ENCODE measurements at regions of chr15 and their contacts with region 1.

Region 1: GRCh38 chr15:84748274-84749110 is at the start of gene ZNF592:
- DNase-seq: peak; percentile 69 to 85 (median 79)
- ATAC-seq: peak; percentile 86
- H3K4me3 ChIP-seq: peak within 1 kb of the TSS; percentile 96
- H3K4me3 Mint-ChIP-seq: peak within 1 kb of the TSS; percentile 94 to 99 (median 99)
- H3K27ac ChIP-seq: peak within 1 kb of the TSS; percentile 89
- H3K27ac Mint-ChIP-seq: peak within 1 kb of the TSS; percentile 94 to 100 (median 99)
- H3K4me1 ChIP-seq: peaks cover 29 to 37% of the 10 kb centered on the region in 2 donors
- H3K4me1 Mint-ChIP-seq: peaks cover 53 to 78% (median 71%) of the 10 kb centered on the region in 7 donors
- H3K27me3 ChIP-seq: no peaks in the 10 kb centered on the region
- H3K27me3 Mint-ChIP-seq: no peaks in the 10 kb centered on the region
- total RNA-seq, gene ZNF592: 36.6 to 39.0 (median 37.6) TPM

Region 2: DNA sequence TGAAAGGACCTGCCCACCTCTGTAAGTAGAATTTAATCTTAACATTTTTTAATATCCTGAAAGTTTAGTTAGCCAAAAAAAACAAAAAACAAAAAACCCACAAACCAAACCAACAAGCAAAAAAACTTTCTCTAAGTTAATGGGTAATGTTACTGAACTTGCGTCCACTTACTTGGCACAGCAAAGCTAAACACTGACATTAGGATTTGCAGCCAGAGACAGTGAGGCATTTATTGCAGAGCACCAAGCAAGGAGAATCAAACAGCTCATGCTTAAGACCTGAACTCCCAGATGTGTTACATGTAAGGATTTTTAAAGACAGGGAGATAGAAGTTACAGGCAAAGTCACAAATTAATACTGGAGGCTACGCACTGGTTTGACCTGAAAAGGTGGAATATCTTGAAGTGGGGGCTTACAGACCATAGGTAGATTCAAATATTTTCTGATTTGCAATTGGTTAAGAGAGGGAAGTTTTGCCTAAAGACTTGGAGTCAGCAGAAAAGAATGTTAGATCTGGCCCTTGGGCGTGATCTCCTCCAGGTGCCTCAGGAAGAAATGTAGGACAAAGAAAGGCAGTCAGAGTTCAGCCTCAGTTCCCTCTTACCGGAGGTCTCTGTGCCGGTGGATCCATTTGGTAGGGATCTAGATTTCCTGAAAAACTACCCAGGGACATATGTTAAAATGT is 889.5 kb before region 1 on chr15:
- CTCF ChIA-PET with region 1: no interaction called
- POLR2A ChIA-PET with region 1: no interaction called
- intact Hi-C with region 1: no loop called
- DNase-seq: no peak
- ATAC-seq: no peak
- H3K4me3 ChIP-seq: no peak overlapping the region
- H3K4me3 Mint-ChIP-seq: no peak overlapping the region
- H3K27ac ChIP-seq: no peak overlapping the region
- H3K27ac Mint-ChIP-seq: no peak overlapping the region
- H3K4me1 ChIP-seq: no peaks in the 10 kb centered on the region
- H3K4me1 Mint-ChIP-seq: no peaks in the 10 kb centered on the region
- H3K27me3 ChIP-seq: no peaks in the 10 kb centered on the region
- H3K27me3 Mint-ChIP-seq: peaks cover 0 to 25% (median 17%) of the 10 kb centered on the region in 5 donors

Region 3: GRCh38 chr15:84600851-84601838 is 147.3 kb before region 1 on chr15 and contains the start of gene ZSCAN2:
- CTCF ChIA-PET with region 1: no interaction called
- POLR2A ChIA-PET with region 1: interaction called, 5 read pairs
- intact Hi-C with region 1: loop called (anchors 1 to 2 kb)
- DNase-seq: peak; percentile 83 to 93 (median 90)
- ATAC-seq: peak; percentile 98
- H3K4me3 ChIP-seq: peak within 1 kb of the TSS; percentile 96
- H3K4me3 Mint-ChIP-seq: peak within 1 kb of the TSS; percentile 89 to 99 (median 96)
- H3K27ac ChIP-seq: peak within 1 kb of the TSS; percentile 77
- H3K27ac Mint-ChIP-seq: peak within 1 kb of the TSS; percentile 67 to 97 (median 88)
- H3K4me1 ChIP-seq: peaks cover 29 to 36% of the 10 kb centered on the region in 2 donors
- H3K4me1 Mint-ChIP-seq: peaks cover 53 to 89% (median 71%) of the 10 kb centered on the region in 7 donors
- H3K27me3 ChIP-seq: no peaks in the 10 kb centered on the region
- H3K27me3 Mint-ChIP-seq: no peaks in the 10 kb centered on the region
- total RNA-seq, gene ZSCAN2: 4.8 to 13.0 (median 6.8) TPM

Region 4: DNA sequence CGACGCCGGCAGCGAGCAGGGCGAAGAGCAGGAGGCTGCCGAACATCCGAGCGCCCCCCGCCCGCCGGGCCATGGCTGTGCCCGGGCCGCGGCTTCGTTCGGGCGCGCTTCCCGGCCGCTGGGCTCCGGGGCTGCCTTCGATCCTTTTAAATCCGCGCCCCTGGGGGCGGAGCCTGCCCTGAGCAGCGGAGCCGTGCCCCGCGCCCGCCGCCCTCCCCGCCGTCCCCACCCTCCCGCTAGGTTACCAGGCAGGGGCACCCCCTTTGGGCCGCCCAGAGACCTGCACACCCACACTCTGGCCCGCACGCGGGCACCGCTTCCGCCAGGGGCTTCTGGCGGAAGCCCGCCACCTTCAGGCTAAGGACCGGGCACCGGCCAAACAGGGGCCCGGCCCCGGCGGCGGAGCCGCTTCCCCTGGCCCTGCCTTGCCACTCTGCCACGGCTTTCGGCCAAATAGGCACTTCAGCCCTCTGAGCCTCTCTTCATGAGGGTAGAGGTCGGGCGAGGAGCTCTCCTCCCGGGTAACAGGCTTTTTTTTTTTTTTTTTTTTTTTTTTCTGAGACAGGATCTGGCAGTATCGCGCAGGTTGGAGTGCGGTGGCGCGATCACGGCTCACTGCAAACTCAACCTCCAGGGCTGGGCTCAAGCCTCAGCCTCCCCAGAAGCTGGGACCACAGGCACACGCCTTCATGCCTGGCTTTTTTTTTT is 90.3 kb before region 1 on chr15 and contains the start of gene NMB:
- CTCF ChIA-PET with region 1: interaction called, 6 read pairs
- POLR2A ChIA-PET with region 1: interaction called, 25 read pairs
- intact Hi-C with region 1: loop called (anchors 1 kb)
- DNase-seq: peak; percentile 76 to 88 (median 87)
- ATAC-seq: peak; percentile 82
- H3K4me3 ChIP-seq: peak within 1 kb of the TSS; percentile 73
- H3K4me3 Mint-ChIP-seq: peak within 1 kb of the TSS; percentile 78 to 86 (median 83)
- H3K27ac ChIP-seq: peak within 1 kb of the TSS; percentile 76
- H3K27ac Mint-ChIP-seq: peak within 1 kb of the TSS; percentile 74 to 93 (median 84)
- H3K4me1 ChIP-seq: peaks cover 13 to 27% of the 10 kb centered on the region in 2 donors
- H3K4me1 Mint-ChIP-seq: peaks cover 13 to 47% (median 39%) of the 10 kb centered on the region in 7 donors
- H3K27me3 ChIP-seq: no peaks in the 10 kb centered on the region
- H3K27me3 Mint-ChIP-seq: no peaks in the 10 kb centered on the region
- total RNA-seq, gene NMB: 1.2 to 3.1 (median 2.9) TPM

Region 5: GRCh38 chr15:84716036-84716799 is 32.3 kb before region 1 on chr15 and contains the start of gene SEC11A:
- CTCF ChIA-PET with region 1: interaction called, 8 read pairs
- POLR2A ChIA-PET with region 1: interaction called, 357 read pairs
- intact Hi-C with region 1: loop called (anchors 1 kb)
- DNase-seq: peak; percentile 86 to 94 (median 90)
- ATAC-seq: peak; percentile 98
- H3K4me3 ChIP-seq: peak within 1 kb of the TSS; percentile 69
- H3K4me3 Mint-ChIP-seq: peak within 1 kb of the TSS; percentile 86 to 100 (median 94)
- H3K27ac ChIP-seq: peak within 1 kb of the TSS; percentile 72
- H3K27ac Mint-ChIP-seq: peak within 1 kb of the TSS; percentile 93 to 98 (median 96)
- H3K4me1 ChIP-seq: peaks cover 17 to 23% of the 10 kb centered on the region in 2 donors
- H3K4me1 Mint-ChIP-seq: peaks cover 42 to 73% (median 55%) of the 10 kb centered on the region in 7 donors
- H3K27me3 ChIP-seq: no peaks in the 10 kb centered on the region
- H3K27me3 Mint-ChIP-seq: no peaks in the 10 kb centered on the region
- total RNA-seq, gene SEC11A: 54.3 to 108 (median 63.5) TPM

Region 6: DNA sequence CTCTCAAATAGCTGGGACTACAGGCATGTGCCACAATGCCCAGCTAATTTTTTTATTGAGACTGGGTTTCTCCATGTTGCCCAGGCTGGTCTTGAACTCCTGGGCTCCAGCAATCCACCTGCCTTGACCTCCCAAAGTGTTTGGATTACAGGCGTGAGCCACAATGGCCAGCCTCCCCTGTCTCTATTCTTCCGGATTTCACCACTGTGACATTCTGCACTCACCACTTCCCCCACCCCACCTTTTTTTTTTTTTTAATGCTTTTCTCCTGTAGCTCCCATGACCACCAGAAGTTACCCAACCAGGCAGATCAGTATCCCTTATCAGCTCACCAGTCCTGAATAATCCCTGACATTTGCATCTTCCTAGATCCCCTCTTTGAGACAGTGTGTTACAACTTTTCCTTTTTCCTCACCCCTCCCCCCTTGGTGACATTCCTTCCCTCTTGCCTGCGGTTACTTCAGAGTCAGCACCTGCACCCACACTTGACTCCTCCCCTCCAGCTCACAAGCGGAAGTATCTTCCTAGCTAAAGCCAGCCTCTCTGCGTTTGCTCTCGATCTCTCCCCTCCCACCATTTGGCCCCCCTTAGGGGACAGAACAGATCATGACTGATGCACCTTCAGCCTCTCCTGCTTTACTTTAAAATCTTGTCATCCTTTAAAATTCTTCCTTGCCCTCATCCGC is 13.6 kb before region 1 on chr15:
- CTCF ChIA-PET with region 1: interaction called, 10 read pairs
- POLR2A ChIA-PET with region 1: interaction called, 130 read pairs
- intact Hi-C with region 1: loop called (anchors 1 kb)
- DNase-seq: peak in 8 of 9 donors; percentile 69 to 83 (median 78)
- ATAC-seq: peak; percentile 85
- H3K4me3 ChIP-seq: peak overlapping the region; percentile 56
- H3K4me3 Mint-ChIP-seq: peak overlapping the region; percentile 71 to 89 (median 84)
- H3K27ac ChIP-seq: peak overlapping the region; percentile 67
- H3K27ac Mint-ChIP-seq: peak overlapping the region; percentile 89 to 96 (median 93)
- H3K4me1 ChIP-seq: peaks cover 34 to 47% of the 10 kb centered on the region in 2 donors
- H3K4me1 Mint-ChIP-seq: peaks cover 36 to 62% (median 50%) of the 10 kb centered on the region in 7 donors
- H3K27me3 ChIP-seq: no peaks in the 10 kb centered on the region
- H3K27me3 Mint-ChIP-seq: no peaks in the 10 kb centered on the region

Region 7: GRCh38 chr15:84883433-84883832 is 134.9 kb after region 1 on chr15:
- CTCF ChIA-PET with region 1: no interaction called
- POLR2A ChIA-PET with region 1: no interaction called
- intact Hi-C with region 1: loop called in 1 of 2 experiments (anchors 1 kb)
- DNase-seq: no peak
- ATAC-seq: no peak
- H3K4me3 ChIP-seq: no peak overlapping the region
- H3K4me3 Mint-ChIP-seq: no peak overlapping the region
- H3K27ac ChIP-seq: no peak overlapping the region
- H3K27ac Mint-ChIP-seq: no peak overlapping the region
- H3K4me1 ChIP-seq: no peaks in the 10 kb centered on the region
- H3K4me1 Mint-ChIP-seq: no peaks in the 10 kb centered on the region
- H3K27me3 ChIP-seq: no peaks in the 10 kb centered on the region
- H3K27me3 Mint-ChIP-seq: peaks cover 0 to 10% (median 0%) of the 10 kb centered on the region in 5 donors

Region 8: GRCh38 chr15:84992157-84992944 is 243.9 kb after region 1 on chr15:
- CTCF ChIA-PET with region 1: no interaction called
- POLR2A ChIA-PET with region 1: no interaction called
- intact Hi-C with region 1: no loop called
- DNase-seq: peak in 1 of 9 donors; percentile 48
- ATAC-seq: peak; percentile 36
- H3K4me3 ChIP-seq: no peak overlapping the region
- H3K4me3 Mint-ChIP-seq: no peak overlapping the region
- H3K27ac ChIP-seq: no peak overlapping the region
- H3K27ac Mint-ChIP-seq: peak overlapping the region in 4 of 9 donors; percentile 18 to 53 (median 36)
- H3K4me1 ChIP-seq: peaks cover 5 to 27% of the 10 kb centered on the region in 2 donors
- H3K4me1 Mint-ChIP-seq: peaks cover 32 to 63% (median 54%) of the 10 kb centered on the region in 7 donors
- H3K27me3 ChIP-seq: no peaks in the 10 kb centered on the region
- H3K27me3 Mint-ChIP-seq: no peaks in the 10 kb centered on the region

Measured in naive thymus-derived CD4-positive, alpha-beta T cell (primary cell).